ENCODE measurements at regions of chr12 and their contacts with region 1.

Region 1: GRCh38 chr12:31970199-31970598 is 11.0 kb downstream of the RESF1 start:
- DNase-seq: no peak
- H3K4me3 ChIP-seq: no peak overlapping the region
- CTCF ChIP-seq: no peak

Region 2: DNA sequence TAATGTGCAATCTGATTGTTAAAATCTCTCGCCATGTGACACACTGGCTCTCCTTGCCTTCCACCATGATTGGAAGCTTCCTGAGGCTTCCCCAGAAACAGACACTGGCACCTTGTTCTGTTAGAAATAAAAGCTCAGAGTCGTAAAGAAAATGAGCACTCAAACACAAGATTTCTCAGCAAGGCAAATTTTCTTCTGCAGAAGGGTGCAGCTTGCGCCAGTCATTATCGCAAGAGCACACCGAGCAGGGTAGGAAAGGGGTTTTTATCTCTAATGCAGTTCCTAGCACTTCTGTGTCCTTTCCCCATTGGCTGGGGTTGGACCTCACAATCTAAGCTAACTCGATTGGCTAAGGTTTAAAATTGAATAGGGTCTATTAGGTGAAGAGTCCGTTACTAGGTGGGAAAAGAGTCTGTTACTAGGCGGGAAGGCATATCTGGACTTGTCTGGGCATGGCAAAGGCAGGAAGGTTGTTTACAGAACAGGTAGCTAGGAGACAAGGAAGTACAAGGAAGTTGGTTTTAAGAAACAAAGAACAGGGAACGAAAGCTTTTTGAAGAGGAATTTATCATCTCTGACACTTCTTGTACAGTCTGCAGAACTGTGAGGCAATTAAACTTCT is 73.8 kb after region 1 on chr12:
- in situ Hi-C with region 1: loop called (anchors 5 kb)
- DNase-seq: no peak
- H3K4me3 ChIP-seq: no peak overlapping the region
- CTCF ChIP-seq: no peak